Right cardiac atrium (tissue), 5 donors: ENCODE measurements at regions of chr1 and their contacts with region 1.

Region 1: DNA sequence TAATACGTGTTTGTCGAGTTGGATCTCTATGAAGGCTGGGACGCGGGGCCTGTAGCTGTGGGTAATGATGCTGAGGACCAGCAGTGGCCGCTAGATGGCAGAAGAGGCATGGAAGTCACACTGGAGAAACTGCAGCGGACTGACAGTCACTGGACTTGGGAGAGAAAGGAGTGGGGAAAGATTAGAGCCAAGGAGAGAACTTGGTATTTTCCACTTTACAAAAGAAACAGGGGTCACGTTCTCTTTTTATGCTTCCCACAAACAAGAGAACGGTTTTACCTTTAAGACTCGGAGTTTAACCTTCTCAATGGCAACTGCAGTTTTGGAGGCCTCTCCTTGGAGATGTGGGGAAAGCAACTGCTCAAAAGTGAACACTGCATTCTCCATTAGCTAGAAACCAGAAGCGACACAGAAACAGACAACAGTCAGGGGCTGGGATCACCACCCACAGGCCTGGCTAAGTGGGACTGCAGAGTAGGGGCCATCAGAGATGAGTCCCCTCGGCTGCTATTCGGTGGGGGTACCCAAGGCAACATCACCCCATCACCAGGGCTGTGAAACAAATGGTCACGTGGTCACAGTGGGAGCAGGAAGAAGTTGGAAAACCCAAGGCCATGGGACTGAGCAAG is 51.1 kb upstream of the EDEM3 start:
- DNase-seq: peak; percentile 86 to 96 (median 93)
- ATAC-seq: peak; percentile 93
- H3K4me3 ChIP-seq: no peak overlapping the region
- H3K27ac ChIP-seq: peak overlapping the region; percentile 20
- H3K4me1 ChIP-seq: no peaks in the 10 kb centered on the region
- H3K27me3 ChIP-seq: no peaks in the 10 kb centered on the region

Region 2: GRCh38 chr1:184595591-184595990 is 210.2 kb before region 1 on chr1:
- intact Hi-C with region 1: no loop called
- DNase-seq: no peak
- ATAC-seq: no peak
- H3K4me3 ChIP-seq: no peak overlapping the region
- H3K27ac ChIP-seq: no peak overlapping the region
- H3K4me1 ChIP-seq: peaks cover 6% of the 10 kb centered on the region
- H3K27me3 ChIP-seq: no peaks in the 10 kb centered on the region

Region 3: DNA sequence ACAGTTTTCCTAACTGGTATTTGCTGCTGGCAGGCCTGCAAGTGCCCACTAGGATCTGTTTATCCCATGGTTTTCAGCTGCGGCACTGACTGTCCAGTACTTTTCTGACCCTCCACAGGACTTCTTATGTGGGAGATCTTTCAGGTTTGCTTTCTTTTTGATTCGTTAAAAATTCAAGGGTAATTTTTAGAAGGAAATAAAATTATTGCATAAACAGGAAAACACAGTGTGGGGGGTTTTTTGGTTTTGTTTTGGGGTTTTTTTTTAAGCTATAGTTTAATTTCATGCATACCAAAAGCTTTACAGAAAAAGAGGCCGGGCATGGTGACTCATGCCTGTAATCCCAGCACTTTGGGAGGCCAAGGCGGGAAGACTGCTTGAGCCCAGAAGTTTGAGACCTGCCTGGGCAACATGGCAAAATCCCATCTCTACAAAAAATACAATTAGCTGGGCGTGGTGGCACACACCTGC is 164.9 kb after region 1 on chr1:
- intact Hi-C with region 1: no loop called
- DNase-seq: no peak
- ATAC-seq: no peak
- H3K4me3 ChIP-seq: no peak overlapping the region
- H3K27ac ChIP-seq: peak overlapping the region; percentile 90
- H3K4me1 ChIP-seq: no peaks in the 10 kb centered on the region
- H3K27me3 ChIP-seq: no peaks in the 10 kb centered on the region

Region 4: GRCh38 chr1:184982002-184982954 is 176.5 kb after region 1 on chr1:
- intact Hi-C with region 1: loop called (anchors 2 kb)
- DNase-seq: peak; percentile 77 to 91 (median 86)
- ATAC-seq: peak; percentile 95 to 96
- H3K4me3 ChIP-seq: no peak overlapping the region
- H3K27ac ChIP-seq: no peak overlapping the region
- H3K4me1 ChIP-seq: no peaks in the 10 kb centered on the region
- H3K27me3 ChIP-seq: no peaks in the 10 kb centered on the region